ENCODE measurements at regions of chr17 and their contacts with region 1.

Region 1: GRCh38 chr17:81601525-81602120 is 35.3 kb downstream of the NPLOC4 start:
- H3K4me3 ChIP-seq: no peak overlapping the region
- H3K27ac ChIP-seq: no peak overlapping the region
- H3K4me1 ChIP-seq: no peaks in the 10 kb centered on the region
- CTCF ChIP-seq: peak; percentile 43; the same call in 1 of the 2 replicates

Region 2: DNA sequence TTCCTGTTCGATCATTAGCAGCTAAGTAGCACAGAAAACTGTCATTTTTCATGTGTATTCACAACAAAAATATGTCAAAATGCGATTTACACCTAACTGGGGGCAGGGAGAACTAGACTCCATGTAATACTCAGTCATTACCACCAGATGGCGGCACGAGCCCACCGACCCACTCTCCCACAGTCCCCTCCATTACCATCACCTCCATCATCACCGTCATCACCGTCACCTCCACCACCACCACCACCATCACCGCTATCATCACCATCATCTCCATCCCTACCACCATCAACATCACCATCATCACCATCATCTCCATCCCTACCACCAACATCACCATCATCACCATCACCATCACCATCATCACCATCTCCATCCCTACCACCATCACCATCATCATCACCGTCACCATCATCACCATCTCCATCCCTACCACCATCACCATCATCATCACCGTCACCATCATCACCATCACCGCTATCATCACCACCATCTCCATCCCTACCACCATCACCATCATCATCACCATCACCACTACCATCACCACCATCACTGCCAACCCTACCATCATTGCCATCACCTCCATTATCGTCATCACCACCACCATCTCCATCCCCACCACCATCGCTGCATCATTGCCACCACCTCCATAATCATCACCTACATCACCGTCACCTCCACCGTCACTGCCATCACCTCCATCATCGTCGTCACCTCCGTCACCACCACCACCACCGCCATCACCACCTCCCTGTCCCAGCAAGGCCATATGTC is 348.1 kb before region 1 on chr17:
- CTCF ChIA-PET with region 1: interaction called, 27 read pairs
- POLR2A ChIA-PET with region 1: no interaction called
- H3K4me3 ChIP-seq: no peak overlapping the region
- H3K27ac ChIP-seq: no peak overlapping the region
- H3K4me1 ChIP-seq: peaks cover 4% of the 10 kb centered on the region; the same call in 1 of the 2 replicates
- CTCF ChIP-seq: peak; percentile 96

Region 3: DNA sequence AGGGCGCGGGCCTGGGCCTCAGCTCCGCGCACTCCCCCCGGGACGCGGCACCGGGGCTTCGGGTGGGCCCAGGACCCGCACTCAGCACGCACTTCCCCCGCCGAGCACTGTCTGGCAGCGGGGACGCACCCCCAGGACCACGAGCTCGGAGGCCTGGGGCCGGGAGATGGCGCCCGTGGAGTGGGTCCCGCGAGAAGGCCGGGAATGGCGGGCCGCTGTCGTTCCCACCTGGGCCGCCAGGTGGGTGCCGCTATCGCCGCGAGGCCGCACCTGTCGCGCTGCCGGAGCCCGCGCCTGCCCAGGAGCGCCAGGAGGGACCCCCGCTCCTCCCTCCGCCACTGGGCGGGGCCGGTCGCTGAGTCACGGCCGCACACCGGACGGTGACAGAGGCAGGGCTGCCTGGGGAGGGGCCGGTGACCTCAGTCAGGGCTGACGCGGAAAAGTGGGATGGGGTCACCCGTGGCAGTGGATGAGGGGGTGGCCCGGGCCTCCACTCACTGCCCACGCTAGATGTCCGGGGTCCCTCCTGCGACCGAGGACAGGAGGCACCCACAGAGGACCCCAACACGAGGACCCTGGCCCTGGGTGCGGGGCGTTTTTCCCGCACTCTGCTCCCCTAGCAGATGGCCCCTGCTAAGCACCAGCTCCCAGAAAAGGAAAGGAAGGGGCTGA is 82.2 kb before region 1 on chr17:
- CTCF ChIA-PET with region 1: interaction called, 25 read pairs
- POLR2A ChIA-PET with region 1: interaction called, 8 read pairs
- H3K4me3 ChIP-seq: peak overlapping the region; percentile 46
- H3K27ac ChIP-seq: peak overlapping the region; percentile 59; the same call in 1 of the 2 replicates
- H3K4me1 ChIP-seq: peaks cover 11% of the 10 kb centered on the region
- CTCF ChIP-seq: peak; percentile 55; the same call in 1 of the 2 replicates

Region 4: GRCh38 chr17:81553018-81553615 is 48.5 kb before region 1 on chr17:
- CTCF ChIA-PET with region 1: interaction called, 23 read pairs
- POLR2A ChIA-PET with region 1: interaction called, 10 read pairs
- H3K4me3 ChIP-seq: peak overlapping the region; percentile 86
- H3K27ac ChIP-seq: peak overlapping the region; percentile 74
- H3K4me1 ChIP-seq: peaks cover 12% of the 10 kb centered on the region
- CTCF ChIP-seq: peak; percentile 46; the same call in 1 of the 2 replicates

Region 5: DNA sequence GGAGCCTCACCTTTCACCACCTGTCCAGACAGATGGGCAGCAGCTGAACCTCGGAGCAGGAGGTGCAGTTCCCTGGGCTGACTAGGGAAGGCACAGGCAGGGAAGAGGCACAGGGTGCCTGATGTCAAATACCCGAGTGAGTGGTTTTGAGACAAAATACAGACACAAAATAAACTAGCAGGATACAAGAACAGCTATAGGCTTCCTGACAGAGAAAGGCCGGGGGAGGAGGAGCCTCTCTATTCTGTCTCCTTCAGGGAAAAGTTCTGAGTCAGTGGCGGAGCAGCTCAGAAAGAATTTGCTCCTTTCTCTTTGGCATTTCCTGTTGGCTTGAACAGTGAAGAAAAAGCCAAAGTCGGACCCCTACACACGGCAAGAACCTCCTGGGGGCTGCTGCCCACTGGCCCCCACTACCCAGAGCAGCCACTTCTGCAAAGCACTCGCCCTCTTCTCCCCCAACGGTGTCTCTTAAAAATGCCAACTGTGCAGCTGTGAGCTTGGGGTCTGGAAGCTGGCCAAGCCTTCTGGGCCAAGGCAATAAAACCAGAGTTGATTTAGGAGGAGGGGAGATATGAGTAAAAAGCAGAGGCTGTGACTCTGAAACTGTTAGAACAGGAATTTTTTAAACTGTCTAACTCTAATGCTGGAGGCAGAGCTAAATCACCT is 35.0 kb before region 1 on chr17:
- CTCF ChIA-PET with region 1: interaction called, 69 read pairs
- POLR2A ChIA-PET with region 1: no interaction called
- H3K4me3 ChIP-seq: no peak overlapping the region
- H3K27ac ChIP-seq: peak overlapping the region; percentile 88
- H3K4me1 ChIP-seq: peaks cover 23% of the 10 kb centered on the region
- CTCF ChIP-seq: no peak

Region 6: DNA sequence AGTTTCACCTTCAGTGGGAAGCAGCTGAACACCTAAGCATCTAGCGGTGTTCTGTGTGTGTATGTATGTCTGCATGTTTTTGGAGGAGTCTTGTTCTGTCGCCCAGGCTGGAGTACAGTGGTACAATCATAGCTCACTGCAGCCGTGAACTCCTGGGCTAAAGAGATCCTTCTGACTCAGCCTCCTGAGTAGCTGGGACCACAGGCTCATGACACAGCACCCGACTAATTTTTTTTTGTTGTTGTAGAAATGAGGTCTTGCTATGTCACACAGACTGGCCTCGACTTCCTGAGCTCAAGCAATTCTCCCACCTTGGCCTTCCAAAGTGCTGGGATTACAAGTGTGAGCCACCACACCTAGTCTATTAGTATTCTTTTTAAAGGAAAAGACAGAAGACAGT is 19.3 kb before region 1 on chr17:
- CTCF ChIA-PET with region 1: interaction called, 18 read pairs
- POLR2A ChIA-PET with region 1: interaction called, 4 read pairs
- H3K4me3 ChIP-seq: no peak overlapping the region
- H3K27ac ChIP-seq: no peak overlapping the region
- H3K4me1 ChIP-seq: peaks cover 16% of the 10 kb centered on the region
- CTCF ChIP-seq: no peak

Region 7: DNA sequence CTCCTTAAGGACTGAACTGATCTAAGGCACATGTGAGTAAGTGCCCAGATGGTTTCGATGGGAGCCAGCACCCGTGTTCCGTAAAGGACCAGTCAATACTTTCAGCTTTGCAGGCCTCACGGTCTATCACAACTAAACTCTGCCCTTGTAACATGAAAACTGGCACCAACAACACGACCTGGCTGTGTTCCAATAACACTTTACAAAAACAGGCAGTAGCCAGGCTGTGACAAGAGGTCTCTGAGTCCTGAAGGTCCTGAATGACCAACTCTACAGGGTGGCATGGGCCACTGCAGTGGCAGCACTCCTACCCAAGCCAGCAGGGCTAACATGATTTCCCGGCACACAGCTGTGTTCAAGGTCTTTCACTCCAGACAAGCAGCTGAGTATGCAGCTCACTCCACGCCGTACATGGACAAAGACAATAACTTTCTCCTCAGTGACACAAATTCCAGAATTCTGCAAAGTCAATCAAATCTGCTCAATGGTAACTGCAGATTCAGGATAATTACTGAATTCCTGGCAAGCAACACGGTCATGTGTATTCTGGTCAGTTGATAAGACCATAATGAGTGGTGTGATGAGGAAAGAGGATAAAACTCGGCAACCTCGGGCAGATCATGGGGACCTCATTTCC is 20.0 kb after region 1 on chr17:
- CTCF ChIA-PET with region 1: interaction called, 23 read pairs
- POLR2A ChIA-PET with region 1: no interaction called
- H3K4me3 ChIP-seq: no peak overlapping the region
- H3K27ac ChIP-seq: peak overlapping the region; percentile 6; the same call in 1 of the 2 replicates
- H3K4me1 ChIP-seq: no peaks in the 10 kb centered on the region
- CTCF ChIP-seq: no peak